ENCODE measurements at regions of chr1 and their contacts with region 1.

Region 1: DNA sequence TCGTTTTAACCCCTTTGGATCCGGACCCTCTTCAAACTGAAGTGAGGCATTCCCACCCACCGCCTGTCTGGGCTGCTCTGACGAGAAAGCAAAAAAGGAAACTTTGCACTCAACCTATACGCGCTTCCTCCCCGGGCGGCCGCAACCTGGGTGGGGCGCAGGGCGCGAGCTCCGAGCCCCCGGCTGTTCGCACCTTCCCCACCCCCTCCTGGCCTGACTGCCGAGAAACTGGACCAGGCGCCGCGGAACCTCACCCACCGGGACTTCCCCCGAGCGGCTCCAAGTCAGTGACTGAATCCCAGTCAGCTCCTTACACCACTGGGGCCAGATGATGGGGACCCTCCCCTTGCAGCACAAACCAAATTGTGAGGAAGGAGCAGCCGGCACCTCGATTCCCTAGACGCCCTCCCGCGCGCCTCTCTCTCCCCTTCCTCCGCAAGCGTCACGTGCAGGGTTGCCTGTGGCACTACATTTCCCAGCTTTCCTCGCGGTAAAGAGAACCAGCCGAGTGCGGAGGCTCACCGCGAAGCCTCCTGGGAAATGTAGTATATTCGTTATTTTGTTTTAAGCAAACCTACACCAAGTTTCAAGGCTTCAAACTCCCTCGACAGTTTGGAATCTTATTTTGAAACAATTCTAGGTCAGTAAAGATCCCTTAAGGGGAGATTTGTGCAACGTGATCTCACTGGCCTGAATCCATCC is at the start of gene RAB29:
- DNase-seq: peak; percentile 67 to 92 (median 86)
- ATAC-seq: peak; percentile 92
- H3K4me3 ChIP-seq: peak within 1 kb of the TSS; percentile 81
- H3K4me3 Mint-ChIP-seq: peak within 1 kb of the TSS; percentile 88 to 100 (median 96)
- H3K27ac ChIP-seq: peak within 1 kb of the TSS; percentile 98
- H3K27ac Mint-ChIP-seq: peak within 1 kb of the TSS; percentile 96 to 100 (median 98)
- H3K4me1 ChIP-seq: peaks cover 17 to 24% of the 10 kb centered on the region in 2 donors
- H3K4me1 Mint-ChIP-seq: peaks cover 33 to 67% (median 60%) of the 10 kb centered on the region in 7 donors
- H3K27me3 ChIP-seq: no peaks in the 10 kb centered on the region
- H3K27me3 Mint-ChIP-seq: peaks cover 0 to 2% (median 0%) of the 10 kb centered on the region in 5 donors
- total RNA-seq, gene RAB29: 23.9 to 55.5 (median 45.9) TPM

Region 2: GRCh38 chr1:205121660-205122488 is 653.3 kb before region 1 on chr1 and contains the start of gene RBBP5:
- CTCF ChIA-PET with region 1: no interaction called
- POLR2A ChIA-PET with region 1: interaction called, 3 read pairs
- intact Hi-C with region 1: loop called in 1 of 2 experiments (anchors 10 kb)
- DNase-seq: peak; percentile 87 to 97 (median 93)
- ATAC-seq: peak; percentile 98
- H3K4me3 ChIP-seq: peak within 1 kb of the TSS; percentile 89
- H3K4me3 Mint-ChIP-seq: peak within 1 kb of the TSS; percentile 89 to 99 (median 96)
- H3K27ac ChIP-seq: peak within 1 kb of the TSS; percentile 86
- H3K27ac Mint-ChIP-seq: peak within 1 kb of the TSS; percentile 98 to 100 (median 99)
- H3K4me1 ChIP-seq: peaks cover 18 to 24% of the 10 kb centered on the region in 2 donors
- H3K4me1 Mint-ChIP-seq: peaks cover 30 to 56% (median 51%) of the 10 kb centered on the region in 7 donors
- H3K27me3 ChIP-seq: no peaks in the 10 kb centered on the region
- H3K27me3 Mint-ChIP-seq: no peaks in the 10 kb centered on the region
- total RNA-seq, gene RBBP5: 11.0 to 31.5 (median 21.0) TPM

Region 3: DNA sequence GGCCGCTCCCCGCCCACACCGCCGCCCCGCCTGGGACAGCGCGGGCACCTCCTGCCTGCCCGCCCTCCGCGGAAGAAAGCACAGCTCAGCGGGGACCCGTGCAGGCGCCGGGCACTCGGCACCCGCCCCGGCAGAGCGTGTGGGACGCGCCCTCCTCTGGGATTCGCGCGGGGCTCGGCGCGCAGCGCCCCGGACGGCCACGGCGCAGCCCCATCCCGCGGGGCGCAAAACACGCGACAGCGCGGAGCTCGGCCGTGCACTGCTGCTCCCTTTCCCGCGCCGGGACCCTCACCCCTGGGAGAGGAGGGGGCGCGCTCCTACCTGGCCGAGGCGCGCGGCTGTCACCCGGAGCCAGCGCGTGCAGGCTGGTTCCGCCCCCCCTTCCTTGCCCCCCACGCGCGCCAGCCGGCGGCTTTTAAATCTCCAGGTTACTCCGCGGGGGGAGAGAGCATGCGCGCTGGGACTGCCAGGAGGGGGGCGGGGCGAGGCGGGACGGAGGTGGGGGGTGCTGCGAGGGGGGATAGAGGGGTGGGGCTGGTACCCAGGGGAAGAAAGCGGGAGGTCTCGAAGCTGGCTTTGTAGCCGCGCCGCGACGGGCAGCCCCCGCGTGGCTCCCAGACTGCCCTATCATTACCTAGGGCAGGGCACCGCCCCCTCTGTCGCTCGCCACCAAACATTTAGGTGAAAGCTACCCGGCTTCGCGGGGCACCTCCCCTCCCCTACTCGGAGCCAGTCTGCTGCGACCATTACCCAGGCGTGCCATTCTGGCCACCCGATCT is 94.9 kb before region 1 on chr1 and contains the start of gene SLC45A3:
- CTCF ChIA-PET with region 1: no interaction called
- POLR2A ChIA-PET with region 1: no interaction called
- intact Hi-C with region 1: loop called (anchors 1 kb)
- DNase-seq: peak in 6 of 9 donors; percentile 4 to 55 (median 20)
- ATAC-seq: peak; percentile 69
- H3K4me3 ChIP-seq: peak within 1 kb of the TSS; percentile 42
- H3K4me3 Mint-ChIP-seq: peak within 1 kb of the TSS; percentile 77 to 88 (median 80)
- H3K27ac ChIP-seq: no peak within 1 kb of the TSS
- H3K27ac Mint-ChIP-seq: peak within 1 kb of the TSS in 2 of 9 donors; percentile 8 to 22
- H3K4me1 ChIP-seq: peaks cover 4 to 10% of the 10 kb centered on the region in 2 donors
- H3K4me1 Mint-ChIP-seq: peaks cover 5 to 15% (median 13%) of the 10 kb centered on the region in 7 donors
- H3K27me3 ChIP-seq: peaks cover 0 to 4% of the 10 kb centered on the region in 2 donors
- H3K27me3 Mint-ChIP-seq: peaks cover 12 to 36% (median 22%) of the 10 kb centered on the region in 5 donors
- total RNA-seq, gene SLC45A3: 0.10 to 8.7 (median 0.54) TPM

Region 4: GRCh38 chr1:205729945-205730610 is 45.1 kb before region 1 on chr1:
- CTCF ChIA-PET with region 1: interaction called, 3 read pairs
- POLR2A ChIA-PET with region 1: interaction called, 8 read pairs
- intact Hi-C with region 1: loop called in 1 of 2 experiments (anchors 5 kb)
- DNase-seq: no peak
- ATAC-seq: no peak
- H3K4me3 ChIP-seq: no peak overlapping the region
- H3K4me3 Mint-ChIP-seq: no peak overlapping the region
- H3K27ac ChIP-seq: no peak overlapping the region
- H3K27ac Mint-ChIP-seq: peak overlapping the region in 2 of 9 donors; percentile 9 to 12
- H3K4me1 ChIP-seq: peaks cover 0 to 5% of the 10 kb centered on the region in 2 donors
- H3K4me1 Mint-ChIP-seq: peaks cover 25 to 64% (median 51%) of the 10 kb centered on the region in 7 donors
- H3K27me3 ChIP-seq: no peaks in the 10 kb centered on the region
- H3K27me3 Mint-ChIP-seq: no peaks in the 10 kb centered on the region

Region 5: DNA sequence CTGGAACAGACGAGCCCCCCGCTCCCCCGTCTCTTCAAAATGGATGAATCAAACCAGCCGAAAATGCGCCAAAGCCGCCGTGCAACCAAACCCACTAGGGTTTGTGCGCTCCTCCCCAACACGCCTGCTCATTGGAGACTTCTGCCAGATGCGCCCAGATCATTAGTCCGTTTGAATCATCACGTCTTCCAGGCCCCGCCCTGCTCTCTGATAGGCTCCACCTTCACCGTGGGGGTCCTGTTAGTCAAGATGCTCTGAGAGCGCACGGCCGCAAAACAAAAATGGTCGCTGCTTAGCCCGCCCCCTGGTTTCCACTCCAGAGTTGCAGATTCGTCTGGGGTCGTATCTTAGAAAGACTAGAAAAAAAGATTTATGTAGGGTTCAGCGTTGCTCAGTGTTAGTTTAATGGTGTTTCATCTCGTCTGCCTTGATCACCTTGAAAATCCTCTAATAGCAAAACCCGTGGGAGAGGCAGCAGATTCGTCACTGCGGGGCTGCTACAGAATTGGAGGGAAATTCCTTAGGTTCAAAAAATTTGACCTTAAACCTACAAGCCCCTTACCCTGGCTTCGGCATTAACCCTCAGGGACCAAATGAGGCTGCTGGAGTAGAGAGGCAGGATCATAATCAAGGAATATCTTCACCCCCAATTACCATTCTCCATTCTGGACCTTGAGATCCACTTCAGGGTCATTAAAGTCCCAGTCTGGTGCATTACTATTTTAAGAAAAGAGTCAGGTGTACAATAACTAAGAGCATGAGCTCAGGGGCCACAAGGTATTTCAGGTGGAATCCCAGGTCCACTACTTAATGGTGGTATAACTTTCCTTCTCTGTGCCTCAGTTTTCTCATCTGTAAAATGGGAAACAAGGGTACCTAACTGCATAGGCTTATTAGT is 24.8 kb before region 1 on chr1 and contains the start of gene NUCKS1:
- CTCF ChIA-PET with region 1: interaction called, 5 read pairs
- POLR2A ChIA-PET with region 1: interaction called, 85 read pairs
- intact Hi-C with region 1: loop called (anchors 1 kb)
- DNase-seq: peak; percentile 79 to 99 (median 97)
- ATAC-seq: peak; percentile 86
- H3K4me3 ChIP-seq: peak within 1 kb of the TSS; percentile 81
- H3K4me3 Mint-ChIP-seq: peak within 1 kb of the TSS; percentile 83 to 99 (median 96)
- H3K27ac ChIP-seq: peak within 1 kb of the TSS; percentile 95
- H3K27ac Mint-ChIP-seq: peak within 1 kb of the TSS; percentile 96 to 100 (median 98)
- H3K4me1 ChIP-seq: peaks cover 6 to 10% of the 10 kb centered on the region in 2 donors
- H3K4me1 Mint-ChIP-seq: peaks cover 24 to 49% (median 39%) of the 10 kb centered on the region in 7 donors
- H3K27me3 ChIP-seq: no peaks in the 10 kb centered on the region
- H3K27me3 Mint-ChIP-seq: peaks cover 0 to 3% (median 0%) of the 10 kb centered on the region in 5 donors
- total RNA-seq, gene NUCKS1: 70.4 to 164 (median 122) TPM

Region 6: GRCh38 chr1:205849619-205850355 is 74.6 kb after region 1 on chr1 and contains the start of gene PM20D1:
- CTCF ChIA-PET with region 1: no interaction called
- POLR2A ChIA-PET with region 1: interaction called, 8 read pairs
- intact Hi-C with region 1: loop called (anchors 1 to 2 kb)
- DNase-seq: peak; percentile 48 to 90 (median 85)
- ATAC-seq: peak; percentile 98
- H3K4me3 ChIP-seq: peak within 1 kb of the TSS; percentile 31
- H3K4me3 Mint-ChIP-seq: peak within 1 kb of the TSS; percentile 83 to 98 (median 96)
- H3K27ac ChIP-seq: peak within 1 kb of the TSS; percentile 67
- H3K27ac Mint-ChIP-seq: peak within 1 kb of the TSS; percentile 82 to 99 (median 94)
- H3K4me1 ChIP-seq: no peaks in the 10 kb centered on the region
- H3K4me1 Mint-ChIP-seq: peaks cover 0 to 19% (median 7%) of the 10 kb centered on the region in 7 donors
- H3K27me3 ChIP-seq: no peaks in the 10 kb centered on the region
- H3K27me3 Mint-ChIP-seq: peaks cover 0 to 8% (median 0%) of the 10 kb centered on the region in 5 donors
- total RNA-seq, gene PM20D1: 0.92 to 2.7 (median 1.9) TPM

Region 7: DNA sequence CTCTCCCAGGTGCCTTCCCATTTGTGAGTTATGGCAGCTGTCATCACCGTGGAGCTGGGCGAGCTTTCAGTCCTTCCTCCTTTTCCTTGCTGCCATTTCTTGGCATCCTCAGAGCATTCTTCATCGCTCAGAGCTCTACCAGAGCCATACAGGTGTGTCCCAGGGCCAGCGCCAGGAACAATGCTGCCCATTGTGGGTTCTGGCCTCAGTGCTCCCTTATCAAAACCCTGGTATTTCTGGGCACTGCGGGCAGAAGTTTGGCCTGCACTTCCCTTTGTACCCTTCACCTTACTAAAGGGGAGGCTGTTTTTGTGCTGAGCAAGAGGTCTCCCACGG is 760.7 kb after region 1 on chr1:
- CTCF ChIA-PET with region 1: no interaction called
- POLR2A ChIA-PET with region 1: no interaction called
- intact Hi-C with region 1: no loop called
- DNase-seq: no peak
- ATAC-seq: no peak
- H3K4me3 ChIP-seq: no peak overlapping the region
- H3K4me3 Mint-ChIP-seq: no peak overlapping the region
- H3K27ac ChIP-seq: no peak overlapping the region
- H3K27ac Mint-ChIP-seq: no peak overlapping the region
- H3K4me1 ChIP-seq: no peaks in the 10 kb centered on the region
- H3K4me1 Mint-ChIP-seq: peaks cover 0 to 6% (median 0%) of the 10 kb centered on the region in 7 donors
- H3K27me3 ChIP-seq: no peaks in the 10 kb centered on the region
- H3K27me3 Mint-ChIP-seq: no peaks in the 10 kb centered on the region